ENCODE measurements at regions of chr10 and their contacts with region 1.

Region 1: GRCh38 chr10:122565728-122566206 is 5.2 kb downstream of the DMBT1 start:
- DNase-seq: peak; percentile 79 to 96
- H3K4me3 ChIP-seq: no peak overlapping the region
- CTCF ChIP-seq: peak in 1 of 3 donors; percentile 70
- POLR2A ChIP-seq: no peak

Region 2: DNA sequence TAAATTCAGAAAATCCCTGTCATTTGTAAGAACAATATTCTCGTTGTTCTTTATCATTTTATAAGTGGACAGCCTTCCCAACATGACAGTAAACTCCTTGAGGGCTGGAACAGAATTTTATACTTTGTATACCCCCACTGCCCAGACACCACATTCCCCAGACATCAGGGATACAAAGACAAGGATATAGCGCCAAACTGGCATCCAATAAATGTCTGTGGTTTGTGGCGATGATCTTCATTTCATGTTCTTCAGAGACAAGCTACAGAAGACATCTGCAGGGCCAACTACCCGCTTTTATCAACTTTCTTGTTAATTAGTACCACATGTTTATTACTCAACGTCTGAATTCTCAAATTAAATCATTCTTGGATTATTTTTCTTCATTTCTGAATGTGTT is 793.8 kb before region 1 on chr10:
- intact Hi-C with region 1: no loop called
- DNase-seq: no peak
- H3K4me3 ChIP-seq: no peak overlapping the region
- CTCF ChIP-seq: no peak
- POLR2A ChIP-seq: no peak

Region 3: DNA sequence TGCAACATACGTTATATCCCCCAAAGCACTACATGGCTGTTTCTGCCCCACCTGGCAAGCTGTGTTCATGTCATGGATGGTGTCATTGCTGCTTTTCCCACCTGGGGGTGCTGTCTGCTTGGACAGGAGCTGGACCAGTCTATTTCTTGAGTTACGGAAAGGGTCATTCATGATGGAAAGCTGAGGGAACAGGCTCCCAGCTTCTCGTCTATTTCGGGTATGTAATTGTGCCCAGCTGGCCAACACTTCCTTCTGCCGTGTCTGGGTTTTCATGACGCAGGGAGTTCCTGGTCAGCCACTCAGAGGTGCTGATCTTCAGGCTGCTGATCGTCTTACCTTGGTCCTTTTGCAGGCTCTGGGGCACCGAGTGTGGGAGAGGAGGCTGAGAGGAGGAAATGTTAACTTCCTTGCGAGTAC is 286.0 kb before region 1 on chr10:
- intact Hi-C with region 1: loop called (anchors 10 kb)
- DNase-seq: peak in 1 of 2 donors; percentile 83
- H3K4me3 ChIP-seq: no peak overlapping the region
- CTCF ChIP-seq: no peak
- POLR2A ChIP-seq: no peak

Region 4: GRCh38 chr10:122342293-122343134 is 223.3 kb before region 1 on chr10:
- intact Hi-C with region 1: loop called (anchors 5 kb)
- DNase-seq: peak in 1 of 2 donors; percentile 76
- H3K4me3 ChIP-seq: no peak overlapping the region
- CTCF ChIP-seq: no peak
- POLR2A ChIP-seq: no peak

Region 5: GRCh38 chr10:122419876-122420623 is 145.7 kb before region 1 on chr10:
- intact Hi-C with region 1: loop called (anchors 10 kb)
- DNase-seq: no peak
- H3K4me3 ChIP-seq: no peak overlapping the region
- CTCF ChIP-seq: no peak
- POLR2A ChIP-seq: no peak

Region 6: DNA sequence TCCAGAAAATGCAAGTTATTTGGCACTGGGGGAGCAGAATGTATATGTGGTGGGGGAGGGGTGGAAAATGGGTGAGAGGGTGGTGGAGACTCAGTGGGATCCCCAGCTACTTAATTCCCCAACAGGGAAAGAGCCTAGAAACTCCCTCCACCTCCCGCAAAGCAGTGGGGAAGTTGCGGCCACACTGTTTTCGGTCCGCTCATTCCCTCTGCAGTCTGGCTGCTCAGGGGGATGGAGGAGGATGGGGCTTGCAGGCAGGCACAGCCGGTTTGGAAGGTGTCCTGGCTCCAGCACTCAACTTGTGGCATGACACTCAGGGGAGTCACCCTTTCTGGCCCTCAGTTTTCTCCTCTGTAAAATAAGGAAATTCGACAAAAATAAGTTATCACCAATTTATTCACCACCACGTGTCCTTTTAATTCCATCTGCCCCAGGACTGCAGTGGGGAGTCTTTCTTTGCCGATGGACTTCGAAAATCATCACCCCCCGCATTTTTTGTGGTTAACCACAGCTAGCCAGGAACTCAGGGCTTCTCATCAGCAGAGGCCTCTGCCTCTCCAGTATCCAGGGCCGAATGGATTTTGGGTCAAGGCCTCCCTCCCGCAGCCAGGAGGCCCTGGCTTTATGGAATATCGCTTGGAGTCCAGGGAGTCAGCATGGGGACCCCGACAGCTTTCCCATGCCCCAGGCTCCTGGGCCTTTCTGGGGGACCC is 106.0 kb before region 1 on chr10:
- intact Hi-C with region 1: loop called (anchors 10 kb)
- DNase-seq: peak in 1 of 2 donors; percentile 76
- H3K4me3 ChIP-seq: no peak overlapping the region
- CTCF ChIP-seq: no peak
- POLR2A ChIP-seq: no peak

Region 7: DNA sequence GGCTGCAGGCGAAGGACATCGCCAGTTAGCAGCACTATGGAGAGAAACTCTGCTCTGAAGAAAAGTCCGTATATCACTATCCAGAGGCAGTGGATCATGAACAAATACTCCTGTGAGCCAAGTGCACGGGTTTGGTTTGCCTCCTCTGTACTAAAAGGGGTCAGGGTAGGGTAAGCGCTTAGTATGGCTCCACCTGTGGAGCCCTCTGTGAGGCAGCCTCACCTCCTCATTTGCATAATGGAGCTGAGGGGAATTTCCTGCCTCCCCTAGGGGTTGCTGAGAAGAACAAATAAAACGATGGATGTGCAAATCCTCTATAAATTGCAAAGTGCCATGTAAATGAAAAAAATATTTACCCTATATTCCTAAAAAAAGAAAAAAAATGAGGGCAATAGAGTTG is 1163.8 kb after region 1 on chr10:
- intact Hi-C with region 1: no loop called
- DNase-seq: peak in 1 of 2 donors; percentile 7
- H3K4me3 ChIP-seq: no peak overlapping the region
- CTCF ChIP-seq: no peak
- POLR2A ChIP-seq: no peak

Measured in lower leg skin (tissue), 4 donors.